SK-N-SH (cell line): ENCODE measurements at regions of chr11 and their contacts with region 1.

Region 1: DNA sequence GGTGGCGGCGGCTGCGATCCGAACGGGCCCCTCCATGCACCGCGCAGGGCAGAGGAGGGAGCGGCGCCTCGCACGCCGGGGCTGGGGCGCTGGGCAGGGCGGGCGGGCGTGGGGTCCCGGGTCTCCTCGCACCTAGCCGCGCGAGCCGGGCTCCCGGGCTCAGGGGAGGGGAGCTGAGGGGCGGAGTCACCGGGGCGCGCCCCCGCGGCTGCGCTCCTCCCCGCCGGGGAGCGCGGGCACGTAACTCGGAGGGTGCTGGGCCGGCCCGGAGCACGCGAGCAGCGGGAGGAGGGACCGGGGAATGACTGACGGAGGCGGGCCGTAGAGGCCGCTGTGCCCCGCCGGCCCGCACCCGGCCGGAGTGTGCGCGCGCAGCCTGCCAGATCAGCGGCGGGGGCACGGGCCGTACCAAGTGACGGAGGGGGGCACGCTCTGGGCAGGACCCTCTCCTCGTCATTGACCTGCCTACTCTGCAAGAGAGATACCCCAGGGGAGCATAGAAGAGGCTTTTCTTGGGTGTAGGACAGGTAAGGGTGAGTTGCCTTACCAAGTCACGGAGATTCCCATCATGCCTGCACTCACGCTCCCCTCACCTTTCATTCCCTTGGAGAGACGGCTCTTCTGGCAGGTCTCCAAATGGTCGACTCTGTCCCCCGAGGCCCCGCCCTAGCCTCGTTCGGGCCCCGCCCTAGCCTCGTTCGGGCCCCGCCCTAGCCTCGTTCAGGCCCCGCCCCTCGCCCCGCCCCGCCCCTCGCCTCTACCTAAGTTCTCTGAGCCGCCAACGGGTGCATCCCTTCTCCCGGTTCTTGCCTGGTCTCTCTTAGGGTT is at the start of gene CDON:
- DNase-seq: peak; percentile 100
- H3K4me3 ChIP-seq: peak within 1 kb of the TSS; percentile 69 to 78
- H3K27ac ChIP-seq: peak within 1 kb of the TSS; percentile 67 to 98; a peak in 3 of 4 replicates
- H3K4me1 ChIP-seq: peaks cover 8 to 14% of the 10 kb centered on the region in 2 experiments; a peak in 3 of 4 replicates
- H3K27me3 ChIP-seq: no peaks in the 10 kb centered on the region
- CTCF ChIP-seq: no peak
- EP300 ChIP-seq: peak in 1 of 2 experiments; percentile 73; a peak in 1 of 4 replicates
- RAD21 ChIP-seq: peak; percentile 50
- polyA plus RNA-seq, gene CDON: 3.7 and 4.2 TPM in 2 replicates

Region 2: GRCh38 chr11:125505492-125506080 is 557.3 kb before region 1 on chr11:
- CTCF ChIA-PET with region 1: no interaction called
- POLR2A ChIA-PET with region 1: no interaction called
- DNase-seq: no peak
- H3K4me3 ChIP-seq: no peak overlapping the region
- H3K27ac ChIP-seq: no peak overlapping the region
- H3K4me1 ChIP-seq: no peaks in the 10 kb centered on the region
- H3K27me3 ChIP-seq: no peaks in the 10 kb centered on the region; the same call in 1 of the 2 replicates
- CTCF ChIP-seq: no peak
- EP300 ChIP-seq: no peak
- RAD21 ChIP-seq: no peak

Region 3: DNA sequence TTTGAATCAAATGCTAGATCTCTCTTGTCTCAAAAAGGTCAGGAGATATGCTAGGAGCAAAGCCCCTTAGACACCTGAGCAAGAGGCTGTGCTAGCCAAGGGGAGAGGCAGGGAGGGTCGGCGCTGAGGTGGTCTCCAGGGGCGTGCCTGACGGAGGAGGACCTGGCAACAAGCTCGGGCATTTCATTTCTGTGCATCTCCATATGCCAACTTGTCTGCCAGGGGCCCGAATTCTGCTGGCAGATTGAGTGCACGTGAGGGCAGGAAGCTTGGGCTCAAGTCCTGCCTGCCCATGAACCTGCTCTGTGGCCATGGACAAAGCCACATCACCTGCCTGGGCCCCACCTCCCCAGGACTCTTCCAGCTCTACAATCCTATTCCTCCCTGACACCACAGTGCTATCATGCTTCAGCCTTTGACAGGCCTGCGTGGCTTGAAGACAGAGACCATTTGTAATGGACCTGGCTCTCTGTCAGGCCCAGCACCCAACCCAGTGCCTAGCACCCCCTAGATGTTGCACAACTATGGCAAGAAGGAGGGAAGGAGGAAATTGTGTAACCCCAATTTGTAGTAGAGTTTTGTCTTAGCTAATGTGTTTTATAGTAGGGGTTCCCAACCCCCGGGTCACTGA is 133.3 kb before region 1 on chr11:
- CTCF ChIA-PET with region 1: interaction called, 34 read pairs
- POLR2A ChIA-PET with region 1: interaction called, 4 read pairs
- DNase-seq: no peak
- H3K4me3 ChIP-seq: no peak overlapping the region
- H3K27ac ChIP-seq: no peak overlapping the region
- H3K4me1 ChIP-seq: peaks cover 0 to 24% of the 10 kb centered on the region in 2 experiments; a peak in 1 of 4 replicates
- H3K27me3 ChIP-seq: 0 out of 2 replicates have a peak, but pooled peaks cover 6% of the 10 kb centered on the region
- CTCF ChIP-seq: no peak
- EP300 ChIP-seq: no peak
- RAD21 ChIP-seq: no peak

Region 4: DNA sequence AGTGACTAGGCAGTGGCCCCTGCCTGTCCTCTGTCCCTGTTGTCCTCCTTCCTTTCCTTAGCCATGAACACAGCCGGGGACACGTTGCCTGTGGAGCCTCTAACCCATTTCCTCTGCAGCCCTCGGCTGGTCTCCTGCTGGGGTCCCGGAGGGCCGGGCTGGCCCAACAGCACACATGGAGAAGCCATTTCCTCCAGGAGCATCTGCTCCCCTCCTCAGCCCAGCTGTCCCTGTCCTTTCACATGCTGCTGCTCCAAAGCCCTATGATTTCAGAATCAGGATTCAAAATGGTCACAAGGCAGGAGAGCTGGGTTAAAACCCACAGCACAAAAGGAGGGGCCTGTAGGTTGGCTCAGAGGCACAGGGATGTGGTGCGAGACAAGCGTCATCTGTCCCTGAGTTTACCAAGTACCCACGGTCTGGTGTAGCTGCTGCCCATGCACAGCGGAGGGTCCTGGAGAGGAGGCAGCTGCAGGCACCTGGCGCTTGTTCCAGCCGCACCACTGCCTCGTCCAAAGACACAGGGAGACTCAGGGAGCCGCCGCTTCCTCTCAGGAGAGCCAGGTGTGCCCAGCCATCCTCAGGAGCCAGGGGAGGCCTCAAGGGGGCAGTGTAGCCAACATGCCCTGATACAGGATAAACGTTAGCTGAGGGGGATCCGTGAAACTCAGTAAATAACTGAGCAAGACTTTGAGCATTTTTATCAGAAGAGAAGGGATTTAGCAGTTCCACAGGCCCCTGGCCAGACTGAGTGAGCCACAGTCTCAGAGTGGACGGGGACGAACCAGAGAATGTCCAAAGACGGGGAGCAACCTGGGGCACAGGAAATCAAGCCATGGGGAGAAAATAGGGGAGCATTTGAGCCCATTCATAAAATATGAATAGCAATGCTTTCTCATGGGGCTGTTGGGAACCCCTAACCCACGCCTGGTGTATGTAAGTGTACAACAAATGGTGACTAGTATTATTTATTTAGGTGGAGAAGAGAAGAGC is 121.0 kb before region 1 on chr11:
- CTCF ChIA-PET with region 1: interaction called, 55 read pairs
- POLR2A ChIA-PET with region 1: no interaction called
- DNase-seq: peak; percentile 72
- H3K4me3 ChIP-seq: no peak overlapping the region; a peak in 1 of 4 replicates
- H3K27ac ChIP-seq: no peak overlapping the region
- H3K4me1 ChIP-seq: peaks cover 0 to 13% of the 10 kb centered on the region in 2 experiments; a peak in 1 of 4 replicates
- H3K27me3 ChIP-seq: no peaks in the 10 kb centered on the region
- CTCF ChIP-seq: peak; percentile 64
- EP300 ChIP-seq: no peak
- RAD21 ChIP-seq: peak; percentile 64

Region 5: DNA sequence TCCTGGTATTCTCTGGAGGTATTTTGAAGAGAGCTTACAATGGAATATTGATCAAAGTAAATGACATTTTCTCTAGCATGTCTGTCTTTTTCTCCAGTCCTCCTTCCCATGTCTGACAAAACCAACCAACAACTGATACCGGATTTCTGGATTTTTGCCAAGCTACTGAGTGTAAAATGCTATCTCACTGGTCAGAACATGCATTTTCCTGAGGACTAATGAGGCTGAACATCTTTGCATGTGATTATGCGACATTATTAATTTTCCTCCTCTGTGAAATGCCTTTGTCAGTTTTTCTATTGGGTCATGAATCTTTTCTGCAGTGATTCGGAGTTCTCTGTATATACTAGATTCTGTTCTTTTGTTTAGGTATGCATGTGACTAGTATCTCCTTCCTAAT is 51.6 kb before region 1 on chr11:
- CTCF ChIA-PET with region 1: interaction called, 14 read pairs
- POLR2A ChIA-PET with region 1: no interaction called
- DNase-seq: peak; percentile 38
- H3K4me3 ChIP-seq: no peak overlapping the region
- H3K27ac ChIP-seq: peak overlapping the region in 1 of 2 experiments; percentile 32; a peak in 1 of 4 replicates
- H3K4me1 ChIP-seq: peaks cover 4 to 22% of the 10 kb centered on the region in 2 experiments; a peak in 2 of 4 replicates
- H3K27me3 ChIP-seq: no peaks in the 10 kb centered on the region
- CTCF ChIP-seq: no peak
- EP300 ChIP-seq: no peak; a peak in 1 of 4 replicates
- RAD21 ChIP-seq: no peak

Region 6: DNA sequence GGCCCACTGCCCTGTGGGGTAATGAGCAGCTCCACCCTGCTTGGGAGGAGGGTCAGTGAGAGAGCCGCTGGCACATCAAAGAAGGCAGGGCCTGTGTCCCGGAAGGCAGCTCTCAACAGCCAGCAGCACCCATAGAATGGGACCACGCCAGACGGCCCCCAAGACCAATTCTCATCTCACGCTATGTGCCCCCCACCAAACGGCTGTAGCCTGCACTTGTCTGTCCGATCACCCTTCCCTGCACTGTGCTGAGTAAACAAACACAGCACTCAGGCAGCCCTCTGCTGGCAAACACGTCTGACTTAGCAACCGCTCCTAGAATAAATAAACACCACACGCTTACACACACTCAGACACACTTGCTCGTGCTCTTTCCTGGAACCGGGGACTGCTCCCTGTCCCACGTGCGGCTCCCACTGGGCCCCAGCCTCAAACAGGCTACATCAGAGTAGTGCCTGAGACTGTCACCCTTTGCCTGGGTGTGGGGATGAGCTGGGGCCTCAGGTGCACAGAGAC is 53.0 kb after region 1 on chr11:
- CTCF ChIA-PET with region 1: interaction called, 95 read pairs
- POLR2A ChIA-PET with region 1: interaction called, 69 read pairs
- DNase-seq: peak; percentile 62
- H3K4me3 ChIP-seq: no peak overlapping the region
- H3K27ac ChIP-seq: peak overlapping the region in 1 of 2 experiments; percentile 100; a peak in 3 of 4 replicates
- H3K4me1 ChIP-seq: peaks cover 32 to 70% of the 10 kb centered on the region in 2 experiments
- H3K27me3 ChIP-seq: no peaks in the 10 kb centered on the region
- CTCF ChIP-seq: no peak
- EP300 ChIP-seq: peak in 1 of 2 experiments; percentile 41; a peak in 1 of 4 replicates
- RAD21 ChIP-seq: peak; percentile 73

Region 7: GRCh38 chr11:126194121-126194543 is 131.2 kb after region 1 on chr11:
- CTCF ChIA-PET with region 1: interaction called, 44 read pairs
- POLR2A ChIA-PET with region 1: interaction called, 6 read pairs
- DNase-seq: peak; percentile 82
- H3K4me3 ChIP-seq: no peak overlapping the region; a peak in 1 of 4 replicates
- H3K27ac ChIP-seq: no peak overlapping the region
- H3K4me1 ChIP-seq: peaks cover 0 to 14% of the 10 kb centered on the region in 2 experiments; a peak in 1 of 4 replicates
- H3K27me3 ChIP-seq: no peaks in the 10 kb centered on the region
- CTCF ChIP-seq: peak; percentile 85
- EP300 ChIP-seq: no peak
- RAD21 ChIP-seq: peak; percentile 99

Region 8: GRCh38 chr11:126345759-126346585 is 283.1 kb after region 1 on chr11:
- CTCF ChIA-PET with region 1: no interaction called
- POLR2A ChIA-PET with region 1: no interaction called
- DNase-seq: no peak
- H3K4me3 ChIP-seq: no peak overlapping the region
- H3K27ac ChIP-seq: peak overlapping the region; percentile 61 to 62
- H3K4me1 ChIP-seq: peaks cover 26 to 45% of the 10 kb centered on the region in 2 experiments; a peak in 3 of 4 replicates
- H3K27me3 ChIP-seq: no peaks in the 10 kb centered on the region
- CTCF ChIP-seq: no peak
- EP300 ChIP-seq: no peak
- RAD21 ChIP-seq: no peak